ENCODE measurements at regions of chr3 and their contacts with region 1.

Region 1: DNA sequence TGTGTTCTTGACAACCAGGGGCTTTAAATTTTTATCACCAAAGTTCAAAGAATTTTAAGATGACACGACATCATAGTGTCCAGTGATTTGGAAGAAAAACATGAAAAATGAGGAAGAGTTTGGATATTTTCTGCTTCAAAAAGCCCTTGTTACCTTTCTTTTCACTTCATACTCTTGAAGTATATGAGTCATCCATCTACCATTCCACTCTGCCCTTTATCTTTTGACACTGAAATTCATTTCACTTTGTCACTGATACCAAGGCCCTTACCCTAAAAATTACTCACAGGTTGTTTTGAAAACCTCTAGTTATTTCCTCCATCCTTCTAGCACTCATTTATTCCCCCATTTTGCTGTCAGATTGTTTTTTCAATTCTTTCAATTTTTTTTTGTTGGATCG is 42.7 kb downstream of the OR5H15 start:
- DNase-seq: no peak
- H3K4me3 ChIP-seq: no peak overlapping the region
- H3K27ac ChIP-seq: no peak overlapping the region
- H3K4me1 ChIP-seq: no peaks in the 10 kb centered on the region
- CTCF ChIP-seq: no peak

Region 2: DNA sequence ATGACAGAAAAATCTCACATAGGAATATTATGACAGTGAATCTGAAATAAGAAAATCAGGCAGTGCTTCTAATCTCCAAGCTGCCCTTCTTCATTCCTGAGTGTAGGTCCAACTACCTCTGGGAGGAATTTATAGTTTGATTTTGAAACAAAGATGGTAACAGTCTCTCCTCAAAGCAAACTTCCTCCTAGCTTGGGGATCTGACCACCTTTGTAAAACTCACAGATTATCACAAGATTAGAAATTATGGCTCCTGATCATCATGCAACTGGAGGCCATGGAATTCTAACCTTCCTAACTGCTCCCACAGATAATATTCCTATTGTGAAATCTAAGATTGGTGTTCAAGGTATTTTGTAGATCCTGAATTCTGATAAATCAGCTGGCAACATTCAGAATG is 54.6 kb before region 1 on chr3:
- CTCF ChIA-PET with region 1: no interaction called
- POLR2A ChIA-PET with region 1: no interaction called
- intact Hi-C with region 1: loop called (anchors 1 kb)
- DNase-seq: no peak
- H3K4me3 ChIP-seq: no peak overlapping the region
- H3K27ac ChIP-seq: no peak overlapping the region
- H3K4me1 ChIP-seq: no peaks in the 10 kb centered on the region
- CTCF ChIP-seq: no peak

Region 3: DNA sequence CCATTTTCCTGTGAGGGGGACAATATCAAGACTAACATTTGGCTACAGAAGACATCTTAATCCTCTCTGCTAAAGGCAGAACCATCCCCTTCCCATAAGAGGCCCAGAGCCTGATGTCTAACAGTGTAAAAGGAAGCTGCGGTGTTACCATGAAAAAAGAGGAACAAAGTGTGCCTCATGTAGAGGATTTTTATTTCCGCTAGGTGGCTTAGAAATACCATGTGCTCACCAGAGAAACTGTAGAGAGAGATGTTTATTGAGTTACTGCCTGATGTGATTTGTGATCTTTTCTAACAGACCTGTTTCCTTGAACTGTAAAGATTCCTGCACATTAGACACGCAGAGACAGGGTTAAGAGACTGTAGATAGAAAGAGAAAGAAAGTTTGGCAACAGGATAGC is 20.7 kb before region 1 on chr3:
- CTCF ChIA-PET with region 1: no interaction called
- POLR2A ChIA-PET with region 1: no interaction called
- intact Hi-C with region 1: no loop called
- DNase-seq: peak; percentile 12
- H3K4me3 ChIP-seq: no peak overlapping the region
- H3K27ac ChIP-seq: no peak overlapping the region
- H3K4me1 ChIP-seq: no peaks in the 10 kb centered on the region
- CTCF ChIP-seq: peak; percentile 58

Region 4: GRCh38 chr3:98322101-98322500 is 112.9 kb after region 1 on chr3:
- CTCF ChIA-PET with region 1: no interaction called
- POLR2A ChIA-PET with region 1: no interaction called
- intact Hi-C with region 1: no loop called
- DNase-seq: no peak
- H3K4me3 ChIP-seq: no peak overlapping the region
- H3K27ac ChIP-seq: no peak overlapping the region
- H3K4me1 ChIP-seq: no peaks in the 10 kb centered on the region
- CTCF ChIP-seq: no peak